ENCODE measurements at regions of chr2 and their contacts with region 1.

Region 1: GRCh38 chr2:9205963-9206948 is at the start of gene ASAP2:
- DNase-seq: peak; percentile 45
- H3K4me3 ChIP-seq: peak within 1 kb of the TSS; percentile 64 to 67
- H3K27ac ChIP-seq: peak within 1 kb of the TSS; percentile 78 to 79
- H3K4me1 ChIP-seq: no peaks in the 10 kb centered on the region
- H3K27me3 ChIP-seq: no peaks in the 10 kb centered on the region
- CTCF ChIP-seq: peak; percentile 65 to 87 (median 74)
- POLR2A ChIP-seq: peak; percentile 10
- total RNA-seq, gene ASAP2: 9.2 to 17.8 TPM

Region 2: DNA sequence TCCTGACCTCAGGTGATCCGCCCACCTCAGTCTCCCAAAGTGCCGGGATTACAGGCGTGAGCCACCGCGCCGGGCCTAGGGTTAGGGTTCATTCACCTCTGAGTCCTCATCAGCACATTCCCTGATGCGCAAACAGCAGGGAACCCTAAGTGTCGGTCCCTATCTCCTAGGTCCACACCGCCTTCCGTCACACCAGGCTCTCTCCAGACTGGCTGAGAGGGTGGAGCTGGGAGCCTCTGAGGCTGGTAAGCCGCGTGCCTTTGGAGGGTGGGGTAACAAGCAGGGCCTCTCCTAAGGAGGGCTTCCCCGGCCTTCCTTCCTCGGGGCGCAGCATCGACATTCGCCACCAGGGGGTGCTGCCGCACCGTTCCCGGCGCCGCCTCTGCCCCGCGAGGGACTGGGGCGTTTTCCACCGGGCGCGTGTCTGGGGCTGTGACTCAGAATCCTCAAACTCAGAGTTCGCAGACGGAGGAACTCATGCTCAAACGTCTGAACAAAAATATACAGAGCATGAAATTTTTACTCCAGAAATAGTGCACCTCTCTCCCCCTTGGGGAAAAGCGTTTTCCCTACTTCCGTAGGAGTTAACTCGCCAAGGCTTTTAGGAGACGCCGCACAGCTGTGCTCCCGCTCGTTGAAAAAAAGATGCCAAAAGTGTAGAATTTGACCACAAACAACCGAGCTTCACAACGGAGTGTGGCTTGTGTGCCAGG is 63.5 kb before region 1 on chr2:
- intact Hi-C with region 1: loop called (anchors 10 kb)
- DNase-seq: peak; percentile 65
- H3K4me3 ChIP-seq: no peak overlapping the region
- H3K27ac ChIP-seq: peak overlapping the region in 1 of 2 donors; percentile 42
- H3K4me1 ChIP-seq: no peaks in the 10 kb centered on the region
- H3K27me3 ChIP-seq: peaks cover 2% of the 10 kb centered on the region
- CTCF ChIP-seq: peak; percentile 95 to 99 (median 98)
- POLR2A ChIP-seq: no peak

Region 3: GRCh38 chr2:9310377-9310776 is 104.1 kb after region 1 on chr2:
- intact Hi-C with region 1: loop called (anchors 5 kb)
- DNase-seq: no peak
- H3K4me3 ChIP-seq: no peak overlapping the region
- H3K27ac ChIP-seq: peak overlapping the region; percentile 32 to 51
- H3K4me1 ChIP-seq: no peaks in the 10 kb centered on the region
- H3K27me3 ChIP-seq: no peaks in the 10 kb centered on the region
- CTCF ChIP-seq: no peak
- POLR2A ChIP-seq: peak; percentile 13

Region 4: GRCh38 chr2:9333591-9334171 is 127.4 kb after region 1 on chr2:
- intact Hi-C with region 1: loop called (anchors 5 kb)
- DNase-seq: peak; percentile 72
- H3K4me3 ChIP-seq: no peak overlapping the region
- H3K27ac ChIP-seq: no peak overlapping the region
- H3K4me1 ChIP-seq: peaks cover 7% of the 10 kb centered on the region
- H3K27me3 ChIP-seq: no peaks in the 10 kb centered on the region
- CTCF ChIP-seq: peak; percentile 23 to 83 (median 62)
- POLR2A ChIP-seq: no peak

Region 5: GRCh38 chr2:9423100-9423921 is 217.1 kb after region 1 on chr2 and contains the starts of genes CPSF3 and ITGB1BP1:
- intact Hi-C with region 1: loop called (anchors 2 kb)
- DNase-seq: peak; percentile 94
- H3K4me3 ChIP-seq: peak within 1 kb of the TSS; percentile 60 to 91
- H3K27ac ChIP-seq: peak within 1 kb of the TSS; percentile 89 to 92
- H3K4me1 ChIP-seq: peaks cover 2% of the 10 kb centered on the region
- H3K27me3 ChIP-seq: no peaks in the 10 kb centered on the region
- CTCF ChIP-seq: peak in 2 of 4 experiments; percentile 8 to 14
- POLR2A ChIP-seq: peak; percentile 64
- total RNA-seq, gene CPSF3: 24.8 to 50.8 TPM
- total RNA-seq, gene ITGB1BP1: 26.9 to 36.8 TPM

Measured in prostate gland (tissue), 2 donors.